MCF 10A (cell line): ENCODE measurements at regions of chr9 and their contacts with region 1.

Region 1: DNA sequence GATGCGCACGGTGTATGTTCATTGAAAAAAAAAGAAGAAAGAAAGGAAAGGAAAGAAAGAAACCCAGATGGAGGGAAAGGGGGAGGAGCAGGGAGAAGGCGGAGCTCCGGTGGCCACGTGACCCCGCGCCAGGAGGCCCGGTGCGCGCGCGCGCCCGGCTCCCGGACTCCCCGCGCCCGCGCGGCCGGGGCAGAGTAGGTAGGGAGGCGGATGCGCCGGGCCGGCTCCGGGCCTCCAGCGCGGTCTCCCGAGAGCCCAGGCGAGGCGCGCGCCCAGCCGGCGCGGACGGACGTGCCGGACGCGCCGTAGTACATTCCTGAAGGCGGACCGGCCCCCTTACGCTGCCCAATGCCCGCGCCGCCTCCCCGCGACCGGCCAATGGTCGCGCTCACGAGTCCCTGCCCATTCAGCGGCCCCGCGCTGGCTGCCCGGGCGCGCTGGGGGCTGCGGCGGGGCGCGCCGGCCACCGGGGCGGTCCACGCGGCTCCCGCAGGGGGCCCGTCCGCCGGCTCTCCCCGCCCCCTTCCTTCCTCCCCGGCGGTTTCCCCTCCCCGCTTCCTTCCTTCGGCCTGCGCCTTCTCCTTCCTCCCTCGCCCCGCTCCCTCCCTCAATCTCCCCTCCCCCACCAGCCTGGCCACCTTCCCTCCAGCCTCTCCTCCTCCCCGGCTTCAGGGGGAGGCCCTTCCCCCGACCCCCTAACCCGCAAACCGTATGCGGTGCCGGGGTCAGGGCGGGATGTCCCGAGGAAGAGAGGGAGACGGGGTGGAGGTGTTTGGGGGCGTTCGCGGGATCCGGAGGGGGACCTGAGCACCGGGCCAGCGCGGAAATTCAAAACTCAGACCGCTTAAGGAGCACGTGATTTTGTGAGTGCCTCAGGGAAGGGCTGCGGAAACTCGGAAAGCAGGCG is 5.8 kb downstream of the PTCH1 start:
- DNase-seq: peak; percentile 90
- H3K4me3 Mint-ChIP-seq: peak overlapping the region; percentile 79
- H3K27ac Mint-ChIP-seq: peak overlapping the region; percentile 91
- H3K4me1 Mint-ChIP-seq: peaks cover 7% of the 10 kb centered on the region
- H3K27me3 Mint-ChIP-seq: no peaks in the 10 kb centered on the region
- CTCF ChIP-seq: no peak

Region 2: DNA sequence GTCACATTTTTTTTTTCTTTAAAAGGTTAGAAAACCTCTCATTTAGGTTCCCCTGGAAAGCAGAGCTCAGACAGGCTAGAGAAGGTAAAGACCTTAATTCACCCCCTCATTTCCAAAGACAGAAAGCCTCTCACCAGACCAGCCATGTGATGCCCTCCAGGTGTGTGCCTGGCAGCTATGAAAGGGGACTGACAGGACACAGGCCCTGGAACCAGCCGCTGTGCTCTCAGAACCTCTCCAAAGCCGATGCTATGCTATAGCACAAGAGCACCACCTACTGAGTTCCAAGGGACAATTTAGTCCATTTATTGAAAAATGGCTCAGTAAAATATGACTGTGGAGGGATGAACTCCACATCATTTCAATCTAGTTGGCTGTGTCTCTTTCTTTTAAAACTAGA is 242.3 kb before region 1 on chr9:
- CTCF ChIA-PET with region 1: interaction called, 3 read pairs
- POLR2A ChIA-PET with region 1: interaction called, 3 read pairs
- intact Hi-C with region 1: loop called (anchors 5 kb)
- DNase-seq: peak; percentile 29
- H3K4me3 Mint-ChIP-seq: no peak overlapping the region
- H3K27ac Mint-ChIP-seq: no peak overlapping the region
- H3K4me1 Mint-ChIP-seq: no peaks in the 10 kb centered on the region
- H3K27me3 Mint-ChIP-seq: no peaks in the 10 kb centered on the region
- CTCF ChIP-seq: no peak

Region 3: DNA sequence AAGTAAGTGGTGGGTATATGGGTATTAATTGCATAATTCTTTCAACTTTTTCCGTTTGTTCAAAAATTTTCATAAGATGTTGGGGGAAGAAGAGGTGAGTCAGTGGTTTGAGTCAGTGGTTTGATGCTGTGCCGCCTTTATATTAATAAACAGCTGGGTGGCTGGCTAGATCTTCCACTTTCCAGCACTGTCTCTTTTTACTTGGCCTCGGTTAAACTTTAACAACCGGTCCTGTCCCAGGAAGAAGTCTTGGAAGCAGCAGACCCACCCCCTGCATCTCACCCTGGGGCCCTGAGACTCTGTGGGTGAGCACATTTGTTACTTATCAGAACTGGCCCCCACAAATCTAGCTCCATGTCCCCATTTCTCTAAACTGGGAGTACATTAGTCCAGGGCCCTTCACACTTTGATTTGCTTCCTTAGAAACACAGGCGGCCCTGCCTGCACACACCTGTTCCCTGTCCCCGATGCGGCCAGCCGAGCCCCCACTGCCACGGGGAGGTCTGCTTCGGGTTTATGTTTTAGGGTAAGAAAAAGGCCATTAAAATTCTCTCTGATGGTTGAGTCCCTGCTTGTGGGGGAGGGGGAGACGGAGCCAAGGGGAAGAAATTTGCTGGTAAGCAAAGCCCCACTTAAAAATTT is 84.9 kb before region 1 on chr9:
- CTCF ChIA-PET with region 1: no interaction called
- POLR2A ChIA-PET with region 1: interaction called, 23 read pairs
- intact Hi-C with region 1: loop called (anchors 2 kb)
- DNase-seq: peak; percentile 55
- H3K4me3 Mint-ChIP-seq: peak overlapping the region; percentile 84
- H3K27ac Mint-ChIP-seq: peak overlapping the region; percentile 94
- H3K4me1 Mint-ChIP-seq: no peaks in the 10 kb centered on the region
- H3K27me3 Mint-ChIP-seq: no peaks in the 10 kb centered on the region
- CTCF ChIP-seq: no peak

Region 4: DNA sequence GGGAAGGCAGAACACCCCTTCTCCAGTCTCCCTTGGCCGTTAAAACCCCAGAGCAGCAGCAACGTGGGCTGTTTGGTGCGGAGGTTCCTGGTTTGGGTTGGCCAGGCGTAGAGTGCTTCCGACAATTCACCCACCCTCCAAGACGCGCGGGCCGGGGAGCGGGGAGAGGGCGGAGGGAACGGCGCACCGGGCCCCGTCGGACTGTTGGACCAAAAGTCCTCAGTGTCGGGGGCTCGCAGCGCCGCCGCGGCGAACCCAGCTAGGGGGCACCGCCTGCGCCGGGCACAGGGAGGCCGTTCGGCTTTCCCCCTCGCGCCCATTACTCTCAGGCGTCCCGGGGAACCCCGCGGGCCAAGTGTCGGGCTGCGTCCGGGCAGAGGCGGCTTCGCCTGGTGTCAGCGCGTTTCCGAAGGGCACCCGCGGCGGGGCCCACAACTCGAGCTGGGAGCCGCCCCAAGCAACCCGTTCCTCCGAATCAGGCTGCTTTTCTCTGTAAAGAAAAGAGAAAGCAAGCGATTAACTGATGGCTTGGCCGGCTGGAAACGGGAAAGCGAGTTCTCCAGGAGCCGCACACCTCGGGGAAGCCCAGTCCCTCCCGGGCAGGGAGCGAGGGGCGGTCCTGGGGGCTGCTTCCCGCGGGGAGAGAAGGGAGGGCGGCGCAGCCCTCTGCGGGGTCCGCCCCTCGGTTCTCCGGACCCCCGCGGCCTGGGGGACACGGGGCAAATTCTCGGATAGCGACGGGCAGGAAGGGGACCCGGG is 510.0 kb after region 1 on chr9:
- CTCF ChIA-PET with region 1: no interaction called
- POLR2A ChIA-PET with region 1: no interaction called
- intact Hi-C with region 1: no loop called
- DNase-seq: no peak
- H3K4me3 Mint-ChIP-seq: no peak overlapping the region
- H3K27ac Mint-ChIP-seq: no peak overlapping the region
- H3K4me1 Mint-ChIP-seq: no peaks in the 10 kb centered on the region
- H3K27me3 Mint-ChIP-seq: peaks cover 39% of the 10 kb centered on the region
- CTCF ChIP-seq: no peak

Region 5: DNA sequence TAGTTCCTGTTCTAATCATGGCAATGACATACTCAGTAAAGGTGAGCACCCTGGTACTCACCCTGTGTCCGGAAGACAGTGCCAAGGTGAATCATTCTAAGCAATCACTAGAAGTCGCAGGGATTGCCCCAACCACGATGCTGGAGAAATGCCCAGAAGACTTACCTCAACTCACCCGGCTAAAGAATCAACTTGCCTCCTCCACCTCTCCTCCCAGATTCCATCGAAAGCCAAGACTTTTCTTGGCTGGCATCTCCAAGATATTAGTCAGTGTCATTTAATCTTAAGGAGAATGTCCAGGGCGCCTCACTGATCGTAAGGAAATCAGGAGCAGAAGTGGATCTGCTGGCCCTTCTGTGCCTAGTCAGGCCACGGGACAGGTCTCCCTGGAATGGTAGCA is 569.4 kb after region 1 on chr9:
- CTCF ChIA-PET with region 1: no interaction called
- POLR2A ChIA-PET with region 1: interaction called, 3 read pairs
- intact Hi-C with region 1: loop called (anchors 2 kb)
- DNase-seq: peak; percentile 99
- H3K4me3 Mint-ChIP-seq: peak overlapping the region; percentile 2
- H3K27ac Mint-ChIP-seq: no peak overlapping the region
- H3K4me1 Mint-ChIP-seq: no peaks in the 10 kb centered on the region
- H3K27me3 Mint-ChIP-seq: peaks cover 13% of the 10 kb centered on the region
- CTCF ChIP-seq: no peak